Esophagus squamous epithelium (tissue), 5 donors: ENCODE measurements at regions of chr10 and their contacts with region 1.

Region 1: DNA sequence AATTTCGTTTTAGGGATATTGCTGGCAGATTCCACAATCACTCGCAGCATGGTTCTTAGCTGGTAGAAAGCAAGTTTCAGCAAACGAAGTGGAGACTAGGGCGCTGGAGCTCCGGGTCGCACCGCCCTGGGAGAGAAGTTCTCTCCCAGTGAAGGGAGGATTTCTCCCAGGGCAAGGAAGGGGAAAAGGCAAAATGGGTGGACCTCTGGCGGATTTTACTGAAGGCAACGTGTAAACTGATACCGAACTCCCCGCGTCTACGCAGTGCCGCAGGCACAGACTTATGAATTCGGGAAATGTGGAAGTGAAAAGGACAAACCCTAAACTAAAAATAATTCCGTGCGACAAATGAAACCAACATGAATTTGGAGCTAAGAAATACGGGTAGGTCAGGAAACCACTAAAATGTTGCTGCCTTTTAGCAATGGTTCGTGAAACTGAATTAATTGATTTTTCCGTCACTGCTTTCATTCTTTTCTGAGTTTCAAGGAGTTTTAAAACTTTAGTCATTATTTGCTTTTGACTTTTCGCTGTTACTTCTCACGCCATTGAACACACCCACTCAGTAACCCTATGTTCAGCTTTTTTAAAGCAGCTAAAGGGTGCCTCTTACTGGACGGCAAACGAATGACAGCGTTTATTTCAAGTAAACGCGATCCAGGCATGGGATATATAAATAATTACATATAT is at the start of gene MYOF:
- DNase-seq: no peak
- H3K4me3 ChIP-seq: peak within 1 kb of the TSS; percentile 37 to 67 (median 62)
- H3K27ac ChIP-seq: peak within 1 kb of the TSS; percentile 85 to 93 (median 89)
- H3K4me1 ChIP-seq: peaks cover 9 to 49% (median 12%) of the 10 kb centered on the region in 3 donors
- H3K27me3 ChIP-seq: no peaks in the 10 kb centered on the region
- CTCF ChIP-seq: peak; percentile 19 to 76 (median 64)
- POLR2A ChIP-seq: peak in 2 of 4 donors; percentile 66 to 78
- total RNA-seq, gene MYOF: 61.1 to 123 (median 99.6) TPM

Region 2: GRCh38 chr10:93376372-93377293 is 105.7 kb before region 1 on chr10:
- intact Hi-C with region 1: loop called (anchors 2 kb)
- DNase-seq: no peak
- H3K4me3 ChIP-seq: peak overlapping the region in 2 of 4 donors; percentile 1 to 7
- H3K27ac ChIP-seq: peak overlapping the region; percentile 75 to 90 (median 88)
- H3K4me1 ChIP-seq: peaks cover 0 to 36% (median 22%) of the 10 kb centered on the region in 3 donors
- H3K27me3 ChIP-seq: no peaks in the 10 kb centered on the region
- CTCF ChIP-seq: peak; percentile 61 to 98 (median 95)
- POLR2A ChIP-seq: no peak

Region 3: GRCh38 chr10:93437088-93437945 is 45.0 kb before region 1 on chr10:
- intact Hi-C with region 1: loop called (anchors 5 kb)
- DNase-seq: no peak
- H3K4me3 ChIP-seq: peak overlapping the region in 3 of 4 donors; percentile 8 to 41 (median 18)
- H3K27ac ChIP-seq: peak overlapping the region; percentile 93 to 99 (median 98)
- H3K4me1 ChIP-seq: peaks cover 34 to 100% (median 77%) of the 10 kb centered on the region in 3 donors
- H3K27me3 ChIP-seq: no peaks in the 10 kb centered on the region
- CTCF ChIP-seq: no peak
- POLR2A ChIP-seq: peak in 2 of 4 donors; percentile 21 to 49